ENCODE measurements at regions of chr9 and their contacts with region 1.

Region 1: GRCh38 chr9:6506571-6506970 is 93.6 kb downstream of the UHRF2 start:
- DNase-seq: no peak
- H3K4me3 Mint-ChIP-seq: no peak overlapping the region
- H3K27ac Mint-ChIP-seq: no peak overlapping the region
- H3K4me1 Mint-ChIP-seq: no peaks in the 10 kb centered on the region
- H3K27me3 Mint-ChIP-seq: no peaks in the 10 kb centered on the region
- CTCF ChIP-seq: no peak

Region 2: GRCh38 chr9:6428940-6429889 is 77.4 kb before region 1 on chr9:
- CTCF ChIA-PET with region 1: no interaction called
- intact Hi-C with region 1: loop called (anchors 10 kb)
- DNase-seq: no peak
- H3K4me3 Mint-ChIP-seq: no peak overlapping the region
- H3K27ac Mint-ChIP-seq: no peak overlapping the region
- H3K4me1 Mint-ChIP-seq: no peaks in the 10 kb centered on the region
- H3K27me3 Mint-ChIP-seq: no peaks in the 10 kb centered on the region
- CTCF ChIP-seq: no peak

Region 3: GRCh38 chr9:6552033-6552432 is 45.5 kb after region 1 on chr9:
- CTCF ChIA-PET with region 1: no interaction called
- intact Hi-C with region 1: no loop called
- DNase-seq: no peak
- H3K4me3 Mint-ChIP-seq: no peak overlapping the region
- H3K27ac Mint-ChIP-seq: no peak overlapping the region
- H3K4me1 Mint-ChIP-seq: no peaks in the 10 kb centered on the region
- H3K27me3 Mint-ChIP-seq: no peaks in the 10 kb centered on the region
- CTCF ChIP-seq: no peak

Region 4: DNA sequence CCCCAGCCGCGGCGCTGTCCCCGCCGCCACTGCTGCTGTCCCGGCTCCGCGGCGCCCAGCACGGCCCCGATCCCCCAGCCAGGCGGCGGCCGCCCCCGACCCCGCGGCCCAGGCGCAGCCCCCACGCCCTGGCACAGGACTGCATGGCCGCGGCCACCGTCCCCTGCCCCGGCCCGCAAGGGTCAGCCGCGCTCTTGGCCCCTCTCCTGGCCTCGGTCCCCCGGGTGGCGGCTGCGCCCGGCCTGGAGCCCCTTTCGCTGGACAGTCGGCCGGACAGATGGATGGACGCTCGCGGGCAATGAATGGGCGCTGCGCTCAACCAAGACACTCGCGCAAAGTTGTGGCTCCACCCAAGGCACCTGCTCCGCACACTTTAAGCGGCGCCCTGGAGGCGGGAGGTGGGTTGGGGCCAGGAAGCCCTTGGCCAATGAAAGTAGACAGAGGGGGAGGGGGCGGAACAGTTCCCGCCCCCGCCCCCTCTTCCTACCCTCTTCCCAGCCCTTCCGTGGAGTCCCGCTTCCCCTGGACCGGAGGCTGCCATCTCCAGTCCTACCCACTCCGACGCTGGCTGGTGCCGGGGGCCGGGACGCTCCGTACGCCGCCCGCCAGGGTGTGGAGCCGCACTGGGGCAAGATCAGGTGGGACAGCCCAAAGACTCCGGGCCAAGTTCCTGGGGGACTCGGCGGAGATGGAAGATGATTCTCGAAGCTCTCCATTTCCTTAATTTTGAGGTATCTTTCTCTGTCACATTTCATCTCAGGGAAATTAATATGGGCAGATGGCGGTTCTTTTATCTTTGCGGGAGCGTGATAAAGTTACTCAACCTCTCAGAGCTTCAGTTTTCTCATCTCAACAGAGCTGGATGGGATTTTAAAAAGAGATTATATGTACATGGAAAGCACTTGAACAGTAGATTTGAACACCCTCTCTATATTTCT is 139.1 kb after region 1 on chr9 and contains the start of gene GLDC:
- CTCF ChIA-PET with region 1: no interaction called
- intact Hi-C with region 1: no loop called
- DNase-seq: peak; percentile 76
- H3K4me3 Mint-ChIP-seq: peak within 1 kb of the TSS; percentile 87
- H3K27ac Mint-ChIP-seq: peak within 1 kb of the TSS; percentile 24
- H3K4me1 Mint-ChIP-seq: peaks cover 8% of the 10 kb centered on the region
- H3K27me3 Mint-ChIP-seq: no peaks in the 10 kb centered on the region
- CTCF ChIP-seq: no peak
- total RNA-seq, gene GLDC: 5.1 and 8.0 TPM in 2 replicates